ENCODE measurements at regions of chr21 and their contacts with region 1.

Region 1: DNA sequence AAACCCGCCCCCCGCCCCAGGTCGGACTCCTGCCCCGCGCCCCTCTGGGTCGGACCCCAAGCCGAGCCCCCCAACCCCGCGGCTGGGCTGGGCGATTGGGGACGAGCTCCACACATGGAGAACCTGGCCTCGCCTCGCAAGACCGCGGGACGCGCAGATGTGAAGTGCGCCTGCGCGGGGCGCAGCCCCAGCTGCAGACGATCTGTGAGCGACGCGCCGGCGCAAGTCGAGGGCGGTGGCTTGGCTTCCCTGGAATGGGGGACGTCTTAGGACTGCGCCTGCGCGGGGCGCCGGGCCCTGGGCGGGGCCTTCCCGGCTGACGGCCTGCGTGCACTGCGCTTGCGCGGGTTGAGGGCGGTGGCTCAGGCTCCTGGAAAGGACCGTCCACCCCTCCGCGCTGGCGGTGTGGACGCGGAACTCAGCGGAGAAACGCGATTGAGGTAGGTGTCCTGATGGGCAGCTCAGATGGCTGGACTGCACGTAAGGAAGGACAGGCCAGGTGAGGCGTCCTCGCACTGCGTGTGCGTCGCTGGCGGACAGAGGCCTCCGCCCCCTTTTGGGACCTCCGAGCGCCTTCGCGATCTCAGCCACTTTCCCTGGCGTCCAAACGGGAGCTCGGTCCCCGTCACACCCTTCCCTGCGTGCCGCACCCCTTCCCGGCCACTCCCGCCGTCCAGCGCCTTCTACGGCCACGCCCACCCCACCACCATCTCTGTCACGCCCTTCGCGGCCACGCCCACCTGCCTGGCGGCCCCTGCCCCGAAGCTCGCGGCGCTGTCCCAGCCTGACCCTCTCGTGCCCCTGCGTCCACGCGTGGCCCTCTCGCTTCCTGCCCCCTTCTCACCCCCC is at the start of gene PRMT2:
- DNase-seq: peak; percentile 96 to 99 (median 99)
- H3K4me3 ChIP-seq: peak within 1 kb of the TSS; percentile 82 to 100
- H3K4me3 Mint-ChIP-seq: peak within 1 kb of the TSS; percentile 93 to 98 (median 96)
- H3K27ac ChIP-seq: peak within 1 kb of the TSS; percentile 93
- H3K27ac Mint-ChIP-seq: peak within 1 kb of the TSS; percentile 89 to 99 (median 96)
- H3K4me1 ChIP-seq: peaks cover 72% of the 10 kb centered on the region
- H3K4me1 Mint-ChIP-seq: peaks cover 41 to 80% (median 63%) of the 10 kb centered on the region in 4 donors
- H3K27me3 ChIP-seq: no peaks in the 10 kb centered on the region
- H3K27me3 Mint-ChIP-seq: no peaks in the 10 kb centered on the region
- total RNA-seq, gene PRMT2: 175 to 177 TPM

Region 2: DNA sequence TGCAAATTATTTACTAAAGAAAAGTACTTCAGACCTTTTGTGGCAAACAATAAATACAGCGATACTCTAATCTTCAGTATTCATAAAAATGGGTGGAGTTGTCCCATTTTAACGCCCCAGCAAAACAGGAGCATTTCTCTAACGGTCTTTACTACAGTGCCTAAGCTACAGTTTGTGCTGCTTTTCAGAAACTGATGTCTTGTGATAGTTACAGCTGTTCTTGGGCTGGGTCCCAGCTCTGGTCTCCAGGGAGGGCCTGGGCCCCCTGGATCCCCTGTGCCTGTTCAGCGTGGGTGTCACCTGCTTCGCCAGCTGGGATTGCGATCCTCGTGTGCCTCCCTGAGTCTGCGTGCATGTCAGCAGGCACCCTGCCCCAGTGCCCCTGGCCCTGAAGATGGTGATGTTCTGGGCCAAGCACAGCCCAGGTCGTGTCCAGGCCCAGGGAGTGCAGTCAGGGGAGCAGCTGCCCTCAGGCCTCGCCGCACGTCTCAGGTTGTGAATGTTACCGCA is 240.9 kb before region 1 on chr21:
- CTCF ChIA-PET with region 1: no interaction called
- POLR2A ChIA-PET with region 1: no interaction called
- intact Hi-C with region 1: no loop called
- DNase-seq: no peak
- H3K4me3 ChIP-seq: no peak overlapping the region
- H3K4me3 Mint-ChIP-seq: no peak overlapping the region
- H3K27ac ChIP-seq: no peak overlapping the region
- H3K27ac Mint-ChIP-seq: no peak overlapping the region
- H3K4me1 ChIP-seq: no peaks in the 10 kb centered on the region
- H3K4me1 Mint-ChIP-seq: peaks cover 0 to 4% (median 0%) of the 10 kb centered on the region in 4 donors
- H3K27me3 ChIP-seq: no peaks in the 10 kb centered on the region
- H3K27me3 Mint-ChIP-seq: no peaks in the 10 kb centered on the region

Region 3: GRCh38 chr21:46500224-46500856 is 135.2 kb before region 1 on chr21:
- CTCF ChIA-PET with region 1: interaction called, 4 read pairs
- POLR2A ChIA-PET with region 1: interaction called, 20 read pairs
- intact Hi-C with region 1: no loop called
- DNase-seq: peak in 4 of 5 donors; percentile 14 to 27 (median 20)
- H3K4me3 ChIP-seq: no peak overlapping the region
- H3K4me3 Mint-ChIP-seq: peak overlapping the region in 4 of 8 donors; percentile 13 to 46 (median 28)
- H3K27ac ChIP-seq: no peak overlapping the region
- H3K27ac Mint-ChIP-seq: peak overlapping the region in 6 of 7 donors; percentile 70 to 89 (median 80)
- H3K4me1 ChIP-seq: peaks cover 32% of the 10 kb centered on the region
- H3K4me1 Mint-ChIP-seq: peaks cover 21 to 57% (median 30%) of the 10 kb centered on the region in 4 donors
- H3K27me3 ChIP-seq: no peaks in the 10 kb centered on the region
- H3K27me3 Mint-ChIP-seq: no peaks in the 10 kb centered on the region

Region 4: DNA sequence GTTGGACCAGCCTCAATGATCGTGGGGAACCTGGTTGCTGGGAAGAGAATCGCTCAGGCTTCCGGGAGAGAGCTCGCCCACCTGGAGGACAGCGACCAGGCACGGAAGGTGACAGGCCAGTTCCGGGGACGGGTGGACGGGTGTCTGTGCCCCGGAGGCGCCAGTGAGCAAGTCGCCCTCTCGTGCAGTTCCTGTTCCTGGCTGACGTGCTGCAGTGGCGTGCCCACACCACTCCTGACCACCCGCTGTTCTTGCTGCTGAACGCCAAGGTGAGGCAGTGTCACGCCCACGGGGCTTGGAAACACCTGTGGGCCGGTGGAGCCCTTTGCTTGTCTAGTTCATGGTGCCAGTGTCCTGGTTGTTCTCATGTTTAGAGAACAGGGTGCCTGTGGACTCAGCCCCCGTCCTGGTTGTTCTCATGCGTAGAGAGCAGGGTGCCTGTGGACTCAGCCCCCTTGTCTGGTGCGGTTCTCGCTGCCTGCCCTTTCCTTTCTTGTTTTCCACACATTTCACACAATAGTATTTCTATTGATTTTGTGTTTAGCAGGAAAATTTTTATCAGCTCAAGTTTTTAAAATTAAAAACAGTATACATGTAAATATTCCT is 83.8 kb before region 1 on chr21:
- CTCF ChIA-PET with region 1: interaction called, 13 read pairs
- POLR2A ChIA-PET with region 1: interaction called, 108 read pairs
- intact Hi-C with region 1: no loop called
- DNase-seq: peak in 4 of 5 donors; percentile 20 to 47 (median 28)
- H3K4me3 ChIP-seq: peak overlapping the region in 1 of 2 donors; percentile 27
- H3K4me3 Mint-ChIP-seq: peak overlapping the region; percentile 54 to 87 (median 74)
- H3K27ac ChIP-seq: peak overlapping the region; percentile 58
- H3K27ac Mint-ChIP-seq: peak overlapping the region; percentile 91 to 99 (median 98)
- H3K4me1 ChIP-seq: peaks cover 60% of the 10 kb centered on the region
- H3K4me1 Mint-ChIP-seq: peaks cover 44 to 82% (median 53%) of the 10 kb centered on the region in 4 donors
- H3K27me3 ChIP-seq: no peaks in the 10 kb centered on the region
- H3K27me3 Mint-ChIP-seq: no peaks in the 10 kb centered on the region

Region 5: GRCh38 chr21:46567331-46567730 is 68.2 kb before region 1 on chr21:
- CTCF ChIA-PET with region 1: no interaction called
- POLR2A ChIA-PET with region 1: interaction called, 108 read pairs
- intact Hi-C with region 1: no loop called
- DNase-seq: no peak
- H3K4me3 ChIP-seq: no peak overlapping the region
- H3K4me3 Mint-ChIP-seq: peak overlapping the region in 5 of 8 donors; percentile 8 to 54 (median 20)
- H3K27ac ChIP-seq: no peak overlapping the region
- H3K27ac Mint-ChIP-seq: peak overlapping the region in 5 of 7 donors; percentile 46 to 83 (median 48)
- H3K4me1 ChIP-seq: peaks cover under 1% of the 10 kb centered on the region
- H3K4me1 Mint-ChIP-seq: peaks cover 13 to 49% (median 16%) of the 10 kb centered on the region in 4 donors
- H3K27me3 ChIP-seq: no peaks in the 10 kb centered on the region
- H3K27me3 Mint-ChIP-seq: no peaks in the 10 kb centered on the region

Region 6: GRCh38 chr21:46622226-46622625 is 13.3 kb before region 1 on chr21:
- CTCF ChIA-PET with region 1: interaction called, 3 read pairs
- POLR2A ChIA-PET with region 1: interaction called, 76 read pairs
- intact Hi-C with region 1: loop called (anchors 1 kb)
- DNase-seq: peak; percentile 61 to 79 (median 68)
- H3K4me3 ChIP-seq: no peak overlapping the region
- H3K4me3 Mint-ChIP-seq: peak overlapping the region in 7 of 8 donors; percentile 58 to 83 (median 72)
- H3K27ac ChIP-seq: peak overlapping the region; percentile 44
- H3K27ac Mint-ChIP-seq: peak overlapping the region; percentile 87 to 97 (median 93)
- H3K4me1 ChIP-seq: peaks cover 45% of the 10 kb centered on the region
- H3K4me1 Mint-ChIP-seq: peaks cover 28 to 72% (median 45%) of the 10 kb centered on the region in 4 donors
- H3K27me3 ChIP-seq: no peaks in the 10 kb centered on the region
- H3K27me3 Mint-ChIP-seq: peaks cover 0 to 2% of the 10 kb centered on the region in 2 donors

Measured in CD4-positive, alpha-beta memory T cell (primary cell).